CD4-positive, alpha-beta memory T cell (primary cell): ENCODE measurements at regions of chr4 and their contacts with region 1.

Region 1: DNA sequence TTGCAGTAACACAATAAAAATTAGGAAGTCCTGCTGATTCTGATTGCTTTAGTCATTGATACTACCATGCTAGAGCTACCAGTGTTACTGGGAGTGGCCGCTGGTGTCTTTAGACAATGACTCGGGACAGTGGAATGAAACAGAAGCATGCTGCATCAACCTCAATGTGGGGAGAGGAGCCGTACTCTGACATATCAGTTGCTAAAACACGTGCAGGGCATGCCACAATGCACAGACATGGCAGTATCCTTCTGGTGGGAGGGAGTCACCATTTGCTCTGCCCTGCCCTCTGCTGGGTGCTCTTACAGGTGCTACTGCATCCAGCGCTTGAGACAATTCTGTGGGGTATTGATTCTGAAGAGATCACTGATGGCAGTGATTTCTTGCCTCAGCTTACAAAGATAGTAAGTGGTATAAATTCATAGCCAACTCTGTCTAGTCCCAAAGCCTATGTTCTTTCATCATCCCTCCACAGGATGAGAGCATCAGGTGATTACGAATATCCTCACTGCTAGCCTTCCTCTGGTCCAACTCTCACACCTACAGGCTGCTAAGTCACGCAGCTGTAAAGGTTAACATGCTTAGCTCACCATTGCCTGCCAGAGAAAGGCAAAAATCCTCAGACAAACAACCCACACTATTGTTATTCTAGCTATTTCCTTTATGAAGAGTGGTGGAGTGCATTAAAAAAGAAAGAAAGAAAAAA is 43.7 kb downstream of the NSG1 start:
- DNase-seq: peak; percentile 44 to 57 (median 50)
- H3K4me3 ChIP-seq: no peak overlapping the region
- H3K4me3 Mint-ChIP-seq: no peak overlapping the region
- H3K27ac ChIP-seq: no peak overlapping the region
- H3K27ac Mint-ChIP-seq: peak overlapping the region in 4 of 7 donors; percentile 16 to 51 (median 26)
- H3K4me1 ChIP-seq: no peaks in the 10 kb centered on the region
- H3K4me1 Mint-ChIP-seq: peaks cover 7 to 14% (median 8%) of the 10 kb centered on the region in 4 donors
- H3K27me3 ChIP-seq: no peaks in the 10 kb centered on the region
- H3K27me3 Mint-ChIP-seq: no peaks in the 10 kb centered on the region

Region 2: GRCh38 chr4:4260253-4260652 is 170.4 kb before region 1 on chr4:
- CTCF ChIA-PET with region 1: interaction called, 43 read pairs
- POLR2A ChIA-PET with region 1: interaction called, 3 read pairs
- intact Hi-C with region 1: loop called (anchors 1 kb)
- DNase-seq: peak; percentile 49 to 72 (median 64)
- H3K4me3 ChIP-seq: no peak overlapping the region
- H3K4me3 Mint-ChIP-seq: no peak overlapping the region
- H3K27ac ChIP-seq: no peak overlapping the region
- H3K27ac Mint-ChIP-seq: peak overlapping the region in 5 of 7 donors; percentile 21 to 83 (median 68)
- H3K4me1 ChIP-seq: no peaks in the 10 kb centered on the region
- H3K4me1 Mint-ChIP-seq: peaks cover 4 to 11% (median 8%) of the 10 kb centered on the region in 4 donors
- H3K27me3 ChIP-seq: no peaks in the 10 kb centered on the region
- H3K27me3 Mint-ChIP-seq: no peaks in the 10 kb centered on the region

Region 3: DNA sequence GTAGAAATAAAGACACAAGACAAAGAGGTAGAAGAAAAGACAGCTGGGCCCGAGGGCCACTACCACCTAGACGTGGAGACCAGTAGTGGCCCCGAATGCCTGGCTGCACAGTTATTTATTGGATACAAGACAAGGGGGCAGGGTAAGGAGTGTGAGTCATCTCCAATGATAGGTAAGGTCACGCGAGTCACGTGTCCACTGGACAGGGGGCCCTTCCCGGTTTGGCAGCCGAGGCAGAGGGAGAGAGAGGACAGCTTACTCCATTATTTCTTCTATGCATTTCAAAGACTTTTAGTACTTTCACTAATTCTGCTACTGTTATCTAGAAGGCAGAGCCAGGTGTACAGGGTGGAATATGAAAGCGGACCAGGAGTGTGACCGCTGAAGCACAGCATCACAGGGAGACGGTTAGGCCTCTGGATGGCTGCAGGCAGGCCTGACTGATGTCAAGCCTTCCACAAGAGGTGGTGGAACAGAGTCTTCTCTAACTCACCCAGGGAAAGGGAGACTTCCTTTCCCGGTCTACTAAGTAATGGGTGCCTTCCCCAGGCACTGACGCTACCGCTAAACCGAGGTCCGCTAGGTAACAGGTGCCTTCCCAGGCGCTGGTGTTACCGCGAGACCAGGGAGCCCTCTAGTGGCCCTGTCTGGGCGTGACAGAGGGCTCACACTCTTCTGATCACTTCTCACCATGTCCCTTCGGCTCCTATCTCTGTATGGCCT is 95.7 kb before region 1 on chr4:
- CTCF ChIA-PET with region 1: interaction called, 5 read pairs
- POLR2A ChIA-PET with region 1: no interaction called
- intact Hi-C with region 1: loop called (anchors 5 kb)
- DNase-seq: peak; percentile 73 to 77 (median 76)
- H3K4me3 ChIP-seq: no peak overlapping the region
- H3K4me3 Mint-ChIP-seq: peak overlapping the region in 5 of 8 donors; percentile 30 to 58 (median 41)
- H3K27ac ChIP-seq: no peak overlapping the region
- H3K27ac Mint-ChIP-seq: peak overlapping the region in 6 of 7 donors; percentile 3 to 42 (median 37)
- H3K4me1 ChIP-seq: peaks cover 4% of the 10 kb centered on the region
- H3K4me1 Mint-ChIP-seq: peaks cover 4 to 10% (median 7%) of the 10 kb centered on the region in 4 donors
- H3K27me3 ChIP-seq: no peaks in the 10 kb centered on the region
- H3K27me3 Mint-ChIP-seq: no peaks in the 10 kb centered on the region

Region 4: GRCh38 chr4:4386736-4387392 is 43.8 kb before region 1 on chr4 and contains the start of gene NSG1:
- CTCF ChIA-PET with region 1: interaction called, 20 read pairs
- POLR2A ChIA-PET with region 1: no interaction called
- intact Hi-C with region 1: loop called (anchors 1 kb)
- DNase-seq: peak; percentile 40 to 66 (median 45)
- H3K4me3 ChIP-seq: peak within 1 kb of the TSS; percentile 47 to 54
- H3K4me3 Mint-ChIP-seq: peak within 1 kb of the TSS; percentile 85 to 96 (median 90)
- H3K27ac ChIP-seq: peak within 1 kb of the TSS; percentile 15
- H3K27ac Mint-ChIP-seq: peak within 1 kb of the TSS; percentile 35 to 78 (median 76)
- H3K4me1 ChIP-seq: peaks cover 19% of the 10 kb centered on the region
- H3K4me1 Mint-ChIP-seq: peaks cover 11 to 30% (median 18%) of the 10 kb centered on the region in 4 donors
- H3K27me3 ChIP-seq: no peaks in the 10 kb centered on the region
- H3K27me3 Mint-ChIP-seq: peaks cover 0 to 4% of the 10 kb centered on the region in 2 donors
- total RNA-seq, gene NSG1: 74.9 to 75.1 TPM

Region 5: GRCh38 chr4:4418676-4419390 is 11.8 kb before region 1 on chr4:
- CTCF ChIA-PET with region 1: interaction called, 34 read pairs
- POLR2A ChIA-PET with region 1: no interaction called
- intact Hi-C with region 1: no loop called
- DNase-seq: no peak
- H3K4me3 ChIP-seq: no peak overlapping the region
- H3K4me3 Mint-ChIP-seq: peak overlapping the region in 7 of 8 donors; percentile 19 to 77 (median 67)
- H3K27ac ChIP-seq: no peak overlapping the region
- H3K27ac Mint-ChIP-seq: peak overlapping the region; percentile 66 to 90 (median 80)
- H3K4me1 ChIP-seq: peaks cover 33% of the 10 kb centered on the region
- H3K4me1 Mint-ChIP-seq: peaks cover 24 to 48% (median 37%) of the 10 kb centered on the region in 4 donors
- H3K27me3 ChIP-seq: no peaks in the 10 kb centered on the region
- H3K27me3 Mint-ChIP-seq: no peaks in the 10 kb centered on the region

Region 6: DNA sequence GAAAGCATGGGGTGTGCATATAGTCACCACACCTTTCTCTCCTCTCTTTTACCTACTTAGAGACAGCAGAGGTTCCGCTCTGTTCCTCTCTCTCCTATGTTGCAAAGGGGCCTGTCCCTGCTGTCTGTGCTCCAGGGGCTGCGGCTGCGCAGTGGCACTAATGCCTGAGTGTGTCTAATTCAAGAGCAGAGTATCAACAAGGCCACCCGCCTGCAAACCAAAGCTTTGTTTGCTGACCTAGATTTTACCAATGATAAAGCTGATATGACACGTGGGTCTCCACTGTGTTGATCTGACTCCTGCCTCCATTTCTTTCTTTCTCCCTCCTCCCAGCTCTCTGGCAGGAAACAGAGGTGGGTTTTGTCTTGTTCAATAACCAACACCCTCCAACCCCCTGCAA is 31.2 kb after region 1 on chr4:
- CTCF ChIA-PET with region 1: interaction called, 21 read pairs
- POLR2A ChIA-PET with region 1: interaction called, 8 read pairs
- intact Hi-C with region 1: loop called (anchors 2 kb)
- DNase-seq: peak; percentile 73 to 91 (median 87)
- H3K4me3 ChIP-seq: no peak overlapping the region
- H3K4me3 Mint-ChIP-seq: peak overlapping the region; percentile 73 to 91 (median 82)
- H3K27ac ChIP-seq: peak overlapping the region; percentile 52
- H3K27ac Mint-ChIP-seq: peak overlapping the region; percentile 92 to 99 (median 95)
- H3K4me1 ChIP-seq: peaks cover 48% of the 10 kb centered on the region
- H3K4me1 Mint-ChIP-seq: peaks cover 34 to 65% (median 51%) of the 10 kb centered on the region in 4 donors
- H3K27me3 ChIP-seq: no peaks in the 10 kb centered on the region
- H3K27me3 Mint-ChIP-seq: no peaks in the 10 kb centered on the region

Region 7: GRCh38 chr4:4569028-4569427 is 138.4 kb after region 1 on chr4:
- CTCF ChIA-PET with region 1: no interaction called
- POLR2A ChIA-PET with region 1: no interaction called
- intact Hi-C with region 1: no loop called
- DNase-seq: no peak
- H3K4me3 ChIP-seq: no peak overlapping the region
- H3K4me3 Mint-ChIP-seq: no peak overlapping the region
- H3K27ac ChIP-seq: no peak overlapping the region
- H3K27ac Mint-ChIP-seq: peak overlapping the region in 1 of 7 donors; percentile 17
- H3K4me1 ChIP-seq: no peaks in the 10 kb centered on the region
- H3K4me1 Mint-ChIP-seq: peaks cover 0 to 6% (median 0%) of the 10 kb centered on the region in 4 donors
- H3K27me3 ChIP-seq: no peaks in the 10 kb centered on the region
- H3K27me3 Mint-ChIP-seq: no peaks in the 10 kb centered on the region

Region 8: GRCh38 chr4:5890063-5890727 is 1459.5 kb after region 1 on chr4:
- CTCF ChIA-PET with region 1: no interaction called
- POLR2A ChIA-PET with region 1: no interaction called
- intact Hi-C with region 1: no loop called
- DNase-seq: no peak
- H3K4me3 ChIP-seq: no peak overlapping the region
- H3K4me3 Mint-ChIP-seq: no peak overlapping the region
- H3K27ac ChIP-seq: no peak overlapping the region
- H3K27ac Mint-ChIP-seq: no peak overlapping the region
- H3K4me1 ChIP-seq: no peaks in the 10 kb centered on the region
- H3K4me1 Mint-ChIP-seq: peaks cover 1 to 11% (median 6%) of the 10 kb centered on the region in 4 donors
- H3K27me3 ChIP-seq: peaks cover 24% of the 10 kb centered on the region
- H3K27me3 Mint-ChIP-seq: peaks cover 50 to 52% of the 10 kb centered on the region in 2 donors